ENCODE measurements at regions of chr10 and their contacts with region 1.

Region 1: DNA sequence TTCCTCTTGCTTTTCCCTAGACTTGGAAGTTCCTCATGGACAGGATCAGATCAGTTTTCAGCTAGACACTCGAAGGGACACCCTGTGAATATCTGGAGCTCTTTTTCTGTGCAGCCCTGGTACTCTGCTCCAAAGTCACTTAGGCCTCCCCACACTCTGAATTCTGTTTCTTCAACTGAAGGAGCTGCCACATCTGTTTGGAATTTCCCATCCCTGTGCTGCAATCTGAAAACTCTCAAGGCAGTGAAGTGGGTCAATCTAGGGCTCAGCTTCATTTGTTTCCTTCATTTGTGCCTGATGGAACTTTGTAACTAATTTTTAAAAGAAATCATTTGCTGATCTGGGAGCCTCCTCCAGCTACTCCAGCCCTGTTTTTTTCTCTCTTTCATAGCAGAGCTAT is 9.6 kb downstream of the EPC1 start:
- DNase-seq: no peak
- H3K4me3 ChIP-seq: no peak overlapping the region
- H3K27ac ChIP-seq: no peak overlapping the region
- H3K4me1 ChIP-seq: peaks cover 0 to 4% (median 1%) of the 10 kb centered on the region in 4 experiments; a peak in 3 of 7 replicates
- H3K27me3 ChIP-seq: no peaks in the 10 kb centered on the region
- CTCF ChIP-seq: no peak
- EP300 ChIP-seq: no peak
- POLR2A ChIP-seq: 0 out of 3 replicates have a peak, but pooled peaks of 1 of the 2 experiments have one; percentile 23
- RAD21 ChIP-seq: no peak

Region 2: GRCh38 chr10:32180371-32181280 is 156.7 kb before region 1 on chr10:
- CTCF ChIA-PET with region 1: no interaction called
- POLR2A ChIA-PET with region 1: no interaction called
- DNase-seq: no peak
- H3K4me3 ChIP-seq: no peak overlapping the region
- H3K27ac ChIP-seq: no peak overlapping the region
- H3K4me1 ChIP-seq: no peaks in the 10 kb centered on the region
- H3K27me3 ChIP-seq: no peaks in the 10 kb centered on the region
- CTCF ChIP-seq: no peak
- EP300 ChIP-seq: no peak
- POLR2A ChIP-seq: no peak
- RAD21 ChIP-seq: no peak

Region 3: GRCh38 chr10:32256613-32257437 is 80.5 kb before region 1 on chr10:
- CTCF ChIA-PET with region 1: interaction called, 15 read pairs
- POLR2A ChIA-PET with region 1: interaction called, 5 read pairs
- DNase-seq: peak; percentile 62 to 81
- H3K4me3 ChIP-seq: no peak overlapping the region
- H3K27ac ChIP-seq: no peak overlapping the region
- H3K4me1 ChIP-seq: no peaks in the 10 kb centered on the region
- H3K27me3 ChIP-seq: no peaks in the 10 kb centered on the region
- CTCF ChIP-seq: peak; percentile 70 to 95 (median 76)
- EP300 ChIP-seq: peak in 1 of 2 experiments; percentile 39; a peak in 1 of 3 replicates
- POLR2A ChIP-seq: no peak
- RAD21 ChIP-seq: peak; percentile 77 to 84

Region 4: GRCh38 chr10:32378363-32379317 is 41.3 kb after region 1 on chr10:
- CTCF ChIA-PET with region 1: no interaction called
- POLR2A ChIA-PET with region 1: no interaction called
- DNase-seq: peak in 1 of 2 experiments; percentile 84
- H3K4me3 ChIP-seq: peak overlapping the region; percentile 57 to 87 (median 71)
- H3K27ac ChIP-seq: peak overlapping the region; percentile 64; the same call in 1 of the 2 replicates
- H3K4me1 ChIP-seq: peaks cover 0 to 6% (median 5%) of the 10 kb centered on the region in 4 experiments; a peak in 3 of 7 replicates
- H3K27me3 ChIP-seq: no peaks in the 10 kb centered on the region
- CTCF ChIP-seq: no peak
- EP300 ChIP-seq: no peak
- POLR2A ChIP-seq: peak in 1 of 2 experiments; percentile 41; a peak in 1 of 3 replicates
- RAD21 ChIP-seq: no peak